Tibial artery (tissue), 4 donors: ENCODE measurements at regions of chr11 and their contacts with region 1.

Region 1: GRCh38 chr11:39668640-39669039 is 1790.8 kb downstream of the LRRC4C start:
- DNase-seq: no peak
- H3K4me3 ChIP-seq: no peak overlapping the region
- H3K27ac ChIP-seq: no peak overlapping the region
- H3K4me1 ChIP-seq: no peaks in the 10 kb centered on the region
- H3K27me3 ChIP-seq: no peaks in the 10 kb centered on the region
- CTCF ChIP-seq: no peak

Region 2: DNA sequence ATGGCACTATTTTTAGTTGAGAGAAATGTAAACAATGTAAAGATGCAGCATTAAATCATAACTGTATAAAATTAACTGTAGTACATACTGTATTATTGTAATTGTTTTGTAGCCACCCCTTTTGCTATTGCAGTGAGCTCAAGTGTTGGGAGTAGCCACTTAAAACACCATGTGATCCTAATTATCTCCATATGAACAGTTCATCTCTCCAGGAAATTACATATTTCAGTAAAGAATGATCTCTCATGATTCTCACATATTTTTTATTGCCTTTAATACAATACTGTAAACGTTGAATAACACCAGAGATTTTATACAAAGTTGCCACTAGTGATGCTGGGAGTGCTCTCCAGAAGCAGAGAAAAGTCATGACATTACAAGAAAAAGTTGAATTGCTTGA is 22.2 kb after region 1 on chr11:
- intact Hi-C with region 1: loop called (anchors 2 kb)
- DNase-seq: no peak
- H3K4me3 ChIP-seq: no peak overlapping the region
- H3K27ac ChIP-seq: no peak overlapping the region
- H3K4me1 ChIP-seq: no peaks in the 10 kb centered on the region
- H3K27me3 ChIP-seq: no peaks in the 10 kb centered on the region
- CTCF ChIP-seq: no peak